Colonic mucosa (tissue), 4 donors: ENCODE measurements at regions of chr10 and their contacts with region 1.

Region 1: GRCh38 chr10:60434418-60435046 is 44.9 kb upstream of the ANK3 start:
- DNase-seq: peak; percentile 49
- H3K4me3 ChIP-seq: no peak overlapping the region
- H3K27ac ChIP-seq: no peak overlapping the region
- H3K4me1 ChIP-seq: no peaks in the 10 kb centered on the region
- H3K27me3 ChIP-seq: no peaks in the 10 kb centered on the region
- CTCF ChIP-seq: peak; percentile 61

Region 2: DNA sequence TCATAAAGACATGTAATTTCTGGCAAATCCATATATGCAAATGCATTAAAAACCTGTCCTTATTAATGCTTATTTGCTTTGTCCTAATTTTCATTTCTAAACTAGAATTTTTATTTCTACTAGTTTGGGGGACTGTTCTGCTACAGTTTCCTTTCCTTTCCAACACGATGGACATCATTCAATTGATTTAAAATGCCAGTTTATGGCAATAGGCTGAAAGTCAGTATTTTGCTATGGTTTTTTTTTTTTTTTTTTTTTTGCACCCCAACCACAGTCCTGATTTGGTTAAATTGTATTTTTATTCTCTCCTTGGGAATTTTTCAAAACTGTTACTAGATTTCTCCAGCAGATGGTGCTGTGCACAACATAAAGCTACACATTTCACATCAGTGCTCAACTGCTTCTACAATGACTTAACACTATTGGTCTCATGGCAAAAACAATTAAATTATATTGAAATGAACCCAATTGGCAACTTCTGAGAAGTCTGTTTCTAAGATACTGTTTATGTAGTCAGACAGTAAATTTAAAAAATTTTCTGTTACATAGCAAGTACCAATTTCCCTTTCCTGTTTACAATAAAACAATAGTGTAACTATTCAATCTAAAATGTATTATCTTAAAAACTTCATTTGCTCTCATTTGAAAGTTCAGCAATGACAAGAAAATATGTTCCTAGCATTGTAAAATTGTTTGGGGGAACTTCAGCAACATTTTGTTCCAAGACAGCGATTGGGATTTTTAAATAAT is 334.4 kb before region 1 on chr10:
- intact Hi-C with region 1: loop called (anchors 5 kb)
- DNase-seq: peak; percentile 26
- H3K4me3 ChIP-seq: no peak overlapping the region
- H3K27ac ChIP-seq: no peak overlapping the region
- H3K4me1 ChIP-seq: no peaks in the 10 kb centered on the region
- H3K27me3 ChIP-seq: no peaks in the 10 kb centered on the region
- CTCF ChIP-seq: peak; percentile 49

Region 3: DNA sequence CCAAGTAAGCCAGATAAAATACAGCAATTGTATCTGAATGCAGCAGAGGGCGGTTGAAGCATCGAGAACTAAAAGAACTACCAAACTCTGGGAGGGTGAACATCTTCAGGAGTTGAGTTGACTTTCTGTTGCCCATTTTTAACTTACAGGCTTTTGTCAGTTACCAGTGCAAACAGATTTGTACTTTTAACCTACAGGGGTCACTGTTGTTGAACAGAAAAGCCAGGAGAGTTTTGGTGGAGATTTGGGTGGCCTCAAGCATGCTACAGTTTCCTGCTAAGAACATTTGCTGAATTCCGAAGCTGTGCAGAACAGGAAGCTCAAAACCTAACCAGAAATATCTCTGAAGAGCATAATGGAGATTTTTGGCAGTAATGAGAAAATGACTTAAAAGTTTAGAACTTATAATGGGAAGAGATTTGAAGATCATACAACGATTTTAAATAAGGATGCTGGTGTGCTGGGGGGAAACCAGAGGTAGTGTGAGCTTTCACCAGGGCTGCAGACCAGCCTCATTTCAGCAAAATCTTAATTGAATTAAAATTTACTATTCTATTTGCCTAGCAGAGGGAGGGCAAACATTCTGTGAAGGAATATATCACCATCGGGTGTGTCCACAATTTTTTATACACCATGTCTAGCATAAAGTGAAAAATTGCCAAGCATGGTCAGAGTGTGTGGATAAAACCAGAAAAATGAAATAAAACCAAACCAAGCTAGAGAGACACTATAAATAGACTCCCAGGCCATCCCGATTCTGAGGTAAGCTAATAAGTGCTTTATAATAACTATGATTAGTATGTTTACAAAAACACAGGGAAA is 319.6 kb before region 1 on chr10:
- intact Hi-C with region 1: loop called (anchors 5 kb)
- DNase-seq: peak; percentile 24
- H3K4me3 ChIP-seq: no peak overlapping the region
- H3K27ac ChIP-seq: no peak overlapping the region
- H3K4me1 ChIP-seq: no peaks in the 10 kb centered on the region
- H3K27me3 ChIP-seq: no peaks in the 10 kb centered on the region
- CTCF ChIP-seq: peak; percentile 56

Region 4: GRCh38 chr10:60208676-60209269 is 225.8 kb before region 1 on chr10:
- intact Hi-C with region 1: loop called (anchors 10 kb)
- DNase-seq: no peak
- H3K4me3 ChIP-seq: no peak overlapping the region
- H3K27ac ChIP-seq: no peak overlapping the region
- H3K4me1 ChIP-seq: no peaks in the 10 kb centered on the region
- H3K27me3 ChIP-seq: no peaks in the 10 kb centered on the region
- CTCF ChIP-seq: peak; percentile 71

Region 5: GRCh38 chr10:60513281-60513680 is 78.7 kb after region 1 on chr10:
- intact Hi-C with region 1: no loop called
- DNase-seq: no peak
- H3K4me3 ChIP-seq: no peak overlapping the region
- H3K27ac ChIP-seq: no peak overlapping the region
- H3K4me1 ChIP-seq: no peaks in the 10 kb centered on the region
- H3K27me3 ChIP-seq: no peaks in the 10 kb centered on the region
- CTCF ChIP-seq: no peak